Right ventricle myocardium inferior (tissue), 1 donor: ENCODE measurements at regions of chr11 and their contacts with region 1.

Region 1: DNA sequence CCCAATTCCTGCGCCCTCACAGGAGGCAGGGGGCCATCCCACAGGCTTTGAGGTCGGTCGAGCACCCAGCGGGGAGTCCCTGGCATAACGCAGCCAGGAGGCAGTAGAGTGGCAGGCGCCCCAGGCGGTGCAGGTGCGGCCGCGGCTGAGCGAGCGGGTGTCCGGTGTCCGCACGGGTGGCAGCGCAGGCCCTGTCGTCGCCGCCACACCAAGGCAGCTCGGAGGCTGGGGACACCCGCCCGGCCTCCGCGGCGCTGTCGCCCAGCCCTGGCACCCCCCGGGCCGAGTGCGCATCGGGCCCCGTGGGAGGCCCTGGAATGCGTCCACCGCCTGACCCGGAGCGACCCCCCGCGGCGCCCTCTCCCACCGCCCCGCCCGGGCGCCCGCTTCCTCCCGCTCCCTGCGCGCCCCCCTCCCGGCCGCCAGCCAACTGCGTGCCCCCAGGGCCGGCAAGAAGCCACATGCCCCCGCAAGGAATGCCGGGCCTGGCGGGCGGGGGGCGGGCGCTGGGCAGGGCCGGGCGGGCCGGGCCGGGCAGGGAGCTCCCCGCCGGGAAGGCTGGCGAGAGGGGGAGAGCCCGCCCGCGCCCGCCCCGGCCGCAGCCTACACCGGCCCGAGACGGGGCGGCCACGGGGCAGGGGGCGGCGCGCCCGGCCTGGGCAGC is 33.9 kb downstream of the PRDM11 start:
- DNase-seq: no peak
- ATAC-seq: peak; percentile 74

Region 2: DNA sequence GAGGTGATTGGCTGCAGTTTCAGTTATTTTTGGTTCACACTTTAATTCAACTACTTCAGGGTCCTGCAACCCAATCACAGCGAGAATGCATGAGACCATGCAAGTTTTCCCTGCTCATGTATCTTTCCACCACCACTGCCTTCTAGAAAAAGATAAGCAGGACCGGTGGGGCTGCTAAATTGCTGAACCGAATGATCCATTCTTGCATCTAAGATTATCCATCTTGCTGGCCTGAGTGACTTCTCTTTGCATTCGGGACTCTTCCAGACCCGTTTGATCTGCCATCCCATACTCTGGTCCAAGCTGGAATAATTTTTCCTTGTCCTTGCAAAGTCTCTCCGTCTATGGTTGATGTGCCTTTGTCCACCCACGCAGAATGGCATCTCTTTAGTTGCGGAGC is 173.3 kb before region 1 on chr11:
- intact Hi-C with region 1: no loop called
- DNase-seq: no peak
- ATAC-seq: no peak

Region 3: DNA sequence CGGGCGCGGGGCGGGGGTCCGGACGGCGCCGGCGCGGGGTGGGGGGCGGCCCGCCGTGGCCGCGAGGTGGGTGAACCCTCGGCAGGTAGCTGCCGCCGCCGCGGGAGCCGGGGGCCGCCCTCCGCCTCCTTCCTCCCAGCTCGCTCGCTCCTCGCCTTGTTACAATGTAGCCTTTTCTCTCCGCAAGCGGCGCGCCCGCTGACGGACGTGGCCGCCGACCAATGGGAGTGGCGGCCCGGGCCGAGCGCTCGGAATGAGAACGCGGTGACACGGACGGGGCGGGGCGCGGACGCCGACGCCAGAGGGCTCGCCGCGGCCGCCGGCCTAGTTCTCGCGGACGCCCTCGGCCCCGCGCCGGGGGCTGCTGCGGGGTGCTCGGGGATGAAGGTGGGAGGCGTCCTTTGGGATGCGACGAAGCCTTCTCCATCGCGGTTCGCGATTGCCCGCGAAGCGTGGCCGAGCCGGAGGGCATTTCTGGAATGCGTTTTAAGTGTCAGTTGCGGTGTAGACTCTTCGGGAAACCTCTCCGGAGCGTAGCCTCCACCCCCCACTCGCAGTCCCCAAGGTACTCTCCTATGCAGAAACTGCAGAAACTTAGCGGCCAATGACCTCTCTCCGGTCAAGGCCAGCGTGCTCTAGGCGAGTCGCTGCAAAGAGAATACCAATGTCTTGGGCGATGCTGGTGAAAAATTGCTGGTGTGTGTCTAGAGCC is 33.1 kb before region 1 on chr11:
- intact Hi-C with region 1: loop called (anchors 5 kb)
- DNase-seq: peak; percentile 98
- ATAC-seq: peak; percentile 97